ENCODE measurements at regions of chr1 and their contacts with region 1.

Region 1: DNA sequence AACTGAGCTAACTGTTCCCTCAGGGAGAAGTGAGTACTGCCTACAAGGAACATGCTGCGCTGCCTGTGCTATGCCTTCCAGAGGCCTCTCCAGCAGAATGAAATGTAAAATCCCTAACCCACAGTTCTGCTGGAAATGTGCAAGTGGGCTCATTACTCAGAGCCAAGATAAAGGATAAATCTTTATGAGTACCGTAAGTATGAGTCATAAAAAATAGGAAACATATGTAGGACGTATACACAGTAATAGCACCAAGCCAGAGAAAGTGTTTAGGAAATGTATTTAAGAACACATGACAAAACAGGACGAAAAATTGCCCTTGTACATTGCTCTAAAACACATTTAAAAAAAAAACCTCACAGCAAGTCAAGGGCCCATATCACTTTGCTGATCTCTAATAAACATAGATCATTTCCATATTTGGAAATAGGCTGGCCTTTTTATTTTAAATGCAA is 104.6 kb downstream of the TGFBR3 start:
- DNase-seq: no peak
- H3K4me3 ChIP-seq: no peak overlapping the region
- H3K27ac ChIP-seq: peak overlapping the region; percentile 31 to 70
- H3K4me1 ChIP-seq: peaks cover 8 to 55% (median 44%) of the 10 kb centered on the region in 4 donors
- H3K27me3 ChIP-seq: no peaks in the 10 kb centered on the region
- CTCF ChIP-seq: no peak

Region 2: GRCh38 chr1:91929250-91929649 is 147.9 kb after region 1 on chr1:
- intact Hi-C with region 1: loop called (anchors 5 kb)
- DNase-seq: no peak
- H3K4me3 ChIP-seq: no peak overlapping the region
- H3K27ac ChIP-seq: no peak overlapping the region
- H3K4me1 ChIP-seq: peaks cover 0 to 6% (median 0%) of the 10 kb centered on the region in 4 donors
- H3K27me3 ChIP-seq: no peaks in the 10 kb centered on the region
- CTCF ChIP-seq: no peak